Adrenal gland (tissue), 19 donors: ENCODE measurements at regions of chr1 and their contacts with region 1.

Region 1: DNA sequence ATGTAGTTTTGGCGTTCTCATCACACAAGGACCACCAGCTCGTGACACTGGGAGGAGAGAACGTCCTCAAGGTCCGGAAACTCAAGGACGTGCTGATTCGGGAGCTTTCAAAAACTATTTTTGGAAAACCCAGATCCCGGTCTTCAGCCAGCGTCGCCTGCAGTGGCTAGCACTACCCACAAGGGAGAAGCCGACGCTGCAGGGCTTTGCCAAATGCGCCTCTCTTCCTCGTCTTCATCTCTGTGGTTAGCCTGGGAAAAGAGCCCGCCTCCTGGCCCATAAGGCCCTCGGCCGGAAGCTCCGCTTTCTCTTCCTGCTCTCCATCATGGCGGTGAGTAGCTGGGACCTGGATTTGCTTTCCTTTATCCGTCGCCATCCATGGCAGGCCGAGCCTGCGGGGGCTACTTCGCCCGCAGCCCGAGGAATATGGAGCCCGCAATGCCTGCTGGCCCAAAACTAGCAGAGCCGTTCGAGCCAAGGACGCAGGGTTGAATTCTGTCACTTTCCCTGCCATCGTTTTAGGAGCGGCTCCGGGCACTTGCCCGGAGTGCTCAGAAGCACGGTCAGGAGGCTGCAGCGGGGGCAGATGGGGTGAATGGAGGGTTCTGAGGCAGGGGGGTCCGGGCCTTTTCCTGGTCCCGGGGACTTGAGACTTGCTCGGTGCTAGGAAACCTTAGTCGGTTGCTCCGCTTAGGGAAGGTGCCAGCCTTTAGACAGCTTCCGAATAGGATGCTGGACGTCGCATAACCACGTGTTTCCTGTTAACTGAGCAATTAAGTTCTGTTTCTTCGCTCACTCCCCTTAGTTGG is at the start of gene RPL11:
- DNase-seq: peak; percentile 91 to 98 (median 97)
- H3K4me3 ChIP-seq: peak within 1 kb of the TSS; percentile 57 to 98 (median 90)
- H3K27ac ChIP-seq: peak within 1 kb of the TSS; percentile 70 to 88 (median 75)
- H3K4me1 ChIP-seq: peaks cover 18 to 42% of the 10 kb centered on the region in 2 donors
- H3K27me3 ChIP-seq: no peaks in the 10 kb centered on the region
- CTCF ChIP-seq: peak; percentile 62 to 90 (median 84)
- POLR2A ChIP-seq: peak; percentile 69 to 75
- total RNA-seq, gene RPL11: 685 to 1,692 (median 842) TPM

Region 2: GRCh38 chr1:23743287-23744052 is 51.8 kb after region 1 on chr1 and contains the start of gene ELOA:
- intact Hi-C with region 1: loop called in 1 of 2 experiments (anchors 5 kb)
- DNase-seq: peak; percentile 59 to 75 (median 70)
- H3K4me3 ChIP-seq: peak within 1 kb of the TSS; percentile 60 to 78 (median 70)
- H3K27ac ChIP-seq: peak within 1 kb of the TSS; percentile 25 to 94 (median 84)
- H3K4me1 ChIP-seq: peaks cover 11 to 31% of the 10 kb centered on the region in 2 donors
- H3K27me3 ChIP-seq: no peaks in the 10 kb centered on the region
- CTCF ChIP-seq: no peak
- POLR2A ChIP-seq: peak; percentile 32 to 62
- total RNA-seq, gene ELOA: 28.0 to 44.7 (median 30.9) TPM

Region 3: GRCh38 chr1:23751050-23751814 is 59.5 kb after region 1 on chr1:
- intact Hi-C with region 1: loop called in 1 of 2 experiments (anchors 10 kb)
- DNase-seq: peak; percentile 69 to 92 (median 84)
- H3K4me3 ChIP-seq: no peak overlapping the region
- H3K27ac ChIP-seq: peak overlapping the region in 2 of 5 donors; percentile 39 to 65
- H3K4me1 ChIP-seq: peaks cover 0 to 29% of the 10 kb centered on the region in 2 donors
- H3K27me3 ChIP-seq: no peaks in the 10 kb centered on the region
- CTCF ChIP-seq: peak; percentile 46 to 74 (median 64)
- POLR2A ChIP-seq: no peak